ENCODE measurements at regions of chr12 and their contacts with region 1.

Region 1: GRCh38 chr12:31749024-31749704 is 20.3 kb upstream of the AMN1 start:
- DNase-seq: peak; percentile 96
- H3K4me3 Mint-ChIP-seq: peak overlapping the region; percentile 35
- H3K27ac Mint-ChIP-seq: peak overlapping the region; percentile 51
- H3K4me1 Mint-ChIP-seq: peaks cover 29% of the 10 kb centered on the region
- H3K27me3 Mint-ChIP-seq: no peaks in the 10 kb centered on the region
- CTCF ChIP-seq: no peak

Region 2: GRCh38 chr12:31672521-31672920 is 76.6 kb before region 1 on chr12:
- CTCF ChIA-PET with region 1: no interaction called
- POLR2A ChIA-PET with region 1: no interaction called
- intact Hi-C with region 1: no loop called
- DNase-seq: no peak
- H3K4me3 Mint-ChIP-seq: no peak overlapping the region
- H3K27ac Mint-ChIP-seq: no peak overlapping the region
- H3K4me1 Mint-ChIP-seq: no peaks in the 10 kb centered on the region
- H3K27me3 Mint-ChIP-seq: no peaks in the 10 kb centered on the region
- CTCF ChIP-seq: no peak

Region 3: GRCh38 chr12:31728917-31729640 is 20.1 kb before region 1 on chr12 and contains the start of gene AMN1:
- CTCF ChIA-PET with region 1: interaction called, 4 read pairs
- POLR2A ChIA-PET with region 1: interaction called, 37 read pairs
- intact Hi-C with region 1: loop called (anchors 2 kb)
- DNase-seq: peak; percentile 94
- H3K4me3 Mint-ChIP-seq: peak within 1 kb of the TSS; percentile 84
- H3K27ac Mint-ChIP-seq: peak within 1 kb of the TSS; percentile 76
- H3K4me1 Mint-ChIP-seq: peaks cover 14% of the 10 kb centered on the region
- H3K27me3 Mint-ChIP-seq: no peaks in the 10 kb centered on the region
- CTCF ChIP-seq: no peak
- total RNA-seq, gene AMN1: 3.0 and 5.6 TPM in 2 replicates

Region 4: GRCh38 chr12:31759632-31760459 is 10.7 kb after region 1 on chr12:
- CTCF ChIA-PET with region 1: no interaction called
- POLR2A ChIA-PET with region 1: interaction called, 7 read pairs
- intact Hi-C with region 1: loop called (anchors 1 kb)
- DNase-seq: no peak
- H3K4me3 Mint-ChIP-seq: no peak overlapping the region
- H3K27ac Mint-ChIP-seq: no peak overlapping the region
- H3K4me1 Mint-ChIP-seq: peaks cover 15% of the 10 kb centered on the region
- H3K27me3 Mint-ChIP-seq: no peaks in the 10 kb centered on the region
- CTCF ChIP-seq: no peak

Region 5: DNA sequence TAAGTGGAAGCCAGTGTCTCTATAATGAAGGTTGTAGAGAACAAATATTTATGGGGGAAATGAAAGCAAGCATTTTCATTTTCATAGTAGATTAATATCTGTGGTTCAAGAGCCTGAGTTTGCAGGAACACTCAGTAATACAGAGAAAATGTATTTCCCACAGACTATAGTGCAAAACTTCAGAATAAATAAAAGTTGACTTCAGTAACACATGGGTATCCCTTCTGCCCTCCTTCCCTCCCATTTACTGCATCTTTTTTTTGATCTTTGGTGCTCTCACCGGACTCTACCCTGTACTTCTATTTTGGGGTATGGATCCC is 55.0 kb after region 1 on chr12:
- CTCF ChIA-PET with region 1: no interaction called
- POLR2A ChIA-PET with region 1: no interaction called
- intact Hi-C with region 1: no loop called
- DNase-seq: no peak
- H3K4me3 Mint-ChIP-seq: no peak overlapping the region
- H3K27ac Mint-ChIP-seq: no peak overlapping the region
- H3K4me1 Mint-ChIP-seq: no peaks in the 10 kb centered on the region
- H3K27me3 Mint-ChIP-seq: no peaks in the 10 kb centered on the region
- CTCF ChIP-seq: no peak

Region 6: GRCh38 chr12:31849090-31849687 is 100.0 kb after region 1 on chr12:
- CTCF ChIA-PET with region 1: no interaction called
- POLR2A ChIA-PET with region 1: no interaction called
- intact Hi-C with region 1: no loop called
- DNase-seq: peak; percentile 49
- H3K4me3 Mint-ChIP-seq: no peak overlapping the region
- H3K27ac Mint-ChIP-seq: no peak overlapping the region
- H3K4me1 Mint-ChIP-seq: no peaks in the 10 kb centered on the region
- H3K27me3 Mint-ChIP-seq: no peaks in the 10 kb centered on the region
- CTCF ChIP-seq: no peak